ENCODE measurements at regions of chr2 and their contacts with region 1.

Region 1: GRCh38 chr2:127355386-127356008 is 32.3 kb downstream of the MAP3K2 start:
- DNase-seq: no peak
- H3K4me3 ChIP-seq: no peak overlapping the region
- H3K27ac ChIP-seq: no peak overlapping the region
- H3K4me1 ChIP-seq: no peaks in the 10 kb centered on the region
- H3K27me3 ChIP-seq: no peaks in the 10 kb centered on the region
- CTCF ChIP-seq: peak; percentile 58 to 70 (median 63)

Region 2: DNA sequence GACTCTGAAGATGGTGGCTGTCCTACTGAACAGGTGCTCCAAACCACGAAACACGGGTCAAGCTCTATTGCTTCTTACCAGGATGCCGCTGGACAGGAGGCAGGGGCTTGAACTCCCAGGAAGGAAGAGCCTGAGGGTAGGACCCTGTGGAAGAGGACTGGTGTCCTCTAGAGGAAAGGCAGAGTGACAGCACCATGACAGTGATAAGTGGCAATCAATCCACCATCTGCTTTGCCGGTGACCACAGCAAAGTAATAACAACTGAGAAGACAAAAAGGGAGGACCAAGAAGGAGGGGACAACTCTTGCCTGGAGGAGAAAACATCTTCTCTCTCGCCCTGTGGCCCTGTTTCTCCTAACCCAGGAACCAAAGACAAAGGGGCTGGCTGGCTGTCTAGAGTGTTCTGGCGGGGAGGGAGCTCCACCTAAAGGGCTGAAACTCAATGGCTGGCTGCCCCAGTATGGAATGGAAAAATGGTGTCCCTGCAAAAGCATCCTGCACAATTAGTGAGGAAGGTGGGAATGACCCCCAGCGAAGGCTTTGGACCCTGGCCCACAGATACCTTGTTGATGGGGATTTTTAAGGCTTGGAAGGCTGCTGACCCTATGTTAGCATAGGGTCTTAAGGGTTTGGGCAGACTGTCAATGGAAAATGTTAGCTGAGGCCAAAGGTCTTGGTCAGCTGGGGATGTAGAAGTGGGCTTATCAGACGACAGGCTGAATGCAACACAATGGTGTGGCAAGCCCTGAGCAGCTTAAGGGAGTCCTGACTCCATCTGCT is 98.1 kb after region 1 on chr2:
- dilution Hi-C with region 1: loop called (anchors 25 kb)
- DNase-seq: no peak
- H3K4me3 ChIP-seq: no peak overlapping the region
- H3K27ac ChIP-seq: no peak overlapping the region
- H3K4me1 ChIP-seq: no peaks in the 10 kb centered on the region
- H3K27me3 ChIP-seq: no peaks in the 10 kb centered on the region
- CTCF ChIP-seq: peak in 2 of 3 experiments; percentile 1 to 59

Measured in keratinocyte (primary cell).